ENCODE measurements at regions of chr12 and their contacts with region 1.

Region 1: DNA sequence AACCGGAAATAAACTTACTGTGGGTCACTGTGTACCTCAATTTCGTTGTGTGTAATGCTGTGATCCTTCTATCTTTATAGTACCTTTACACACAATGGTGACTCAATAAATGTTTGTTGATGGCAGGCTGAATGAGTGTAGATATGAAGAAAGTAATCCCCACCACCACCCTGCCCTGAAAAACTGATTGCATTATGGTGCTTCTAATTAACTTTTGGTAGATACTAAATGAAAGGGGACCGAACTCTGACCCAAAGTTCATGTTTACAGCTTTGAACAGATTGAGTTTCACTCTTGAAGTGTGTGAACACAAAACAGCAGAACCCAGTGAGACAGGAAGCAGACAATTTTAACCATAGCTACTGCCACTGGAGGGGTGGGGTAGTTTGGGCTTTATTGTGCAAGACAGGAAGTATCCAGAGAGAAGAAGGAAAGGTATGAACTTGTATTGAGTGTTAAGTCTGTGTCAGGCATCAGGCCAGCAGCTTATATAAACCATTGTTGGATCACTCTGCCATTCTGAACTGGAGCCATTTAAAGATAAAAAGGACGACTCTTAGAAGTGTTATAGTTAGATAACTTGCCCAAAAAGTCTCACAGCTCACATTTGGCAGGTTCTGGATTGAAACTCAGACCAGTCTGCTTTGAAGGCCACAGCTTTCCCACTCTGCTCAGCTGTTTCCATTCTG is 197.0 kb upstream of the AMIGO2 start:
- DNase-seq: peak; percentile 35 to 91 (median 62)
- ATAC-seq: peak; percentile 94
- H3K4me3 ChIP-seq: peak overlapping the region in 1 of 2 experiments; percentile 25
- H3K4me3 Mint-ChIP-seq: peak overlapping the region; percentile 67
- H3K27ac ChIP-seq: peak overlapping the region; percentile 64 to 91
- H3K27ac Mint-ChIP-seq: peak overlapping the region; percentile 97
- H3K4me1 ChIP-seq: peaks cover 67% of the 10 kb centered on the region
- H3K4me1 Mint-ChIP-seq: peaks cover 80% of the 10 kb centered on the region
- H3K27me3 ChIP-seq: no peaks in the 10 kb centered on the region
- H3K27me3 Mint-ChIP-seq: no peaks in the 10 kb centered on the region
- CTCF ChIP-seq: no peak

Region 2: GRCh38 chr12:47164724-47165439 is 111.9 kb before region 1 on chr12:
- CTCF ChIA-PET with region 1: no interaction called
- POLR2A ChIA-PET with region 1: no interaction called
- intact Hi-C with region 1: no loop called
- DNase-seq: no peak
- ATAC-seq: no peak
- H3K4me3 ChIP-seq: no peak overlapping the region
- H3K4me3 Mint-ChIP-seq: no peak overlapping the region
- H3K27ac ChIP-seq: no peak overlapping the region
- H3K27ac Mint-ChIP-seq: no peak overlapping the region
- H3K4me1 ChIP-seq: no peaks in the 10 kb centered on the region
- H3K4me1 Mint-ChIP-seq: peaks cover 31% of the 10 kb centered on the region
- H3K27me3 ChIP-seq: no peaks in the 10 kb centered on the region
- H3K27me3 Mint-ChIP-seq: no peaks in the 10 kb centered on the region
- CTCF ChIP-seq: no peak

Region 3: GRCh38 chr12:47302111-47302671 is 25.4 kb after region 1 on chr12:
- CTCF ChIA-PET with region 1: interaction called, 5 read pairs
- POLR2A ChIA-PET with region 1: interaction called, 7 read pairs
- intact Hi-C with region 1: loop called in 1 of 2 experiments (anchors 2 kb)
- DNase-seq: peak in 1 of 9 experiments; percentile 14
- ATAC-seq: no peak
- H3K4me3 ChIP-seq: no peak overlapping the region
- H3K4me3 Mint-ChIP-seq: peak overlapping the region; percentile 42
- H3K27ac ChIP-seq: no peak overlapping the region
- H3K27ac Mint-ChIP-seq: peak overlapping the region; percentile 80
- H3K4me1 ChIP-seq: peaks cover 39% of the 10 kb centered on the region
- H3K4me1 Mint-ChIP-seq: peaks cover 66% of the 10 kb centered on the region
- H3K27me3 ChIP-seq: no peaks in the 10 kb centered on the region
- H3K27me3 Mint-ChIP-seq: no peaks in the 10 kb centered on the region
- CTCF ChIP-seq: no peak

Region 4: GRCh38 chr12:47307680-47308399 is 31.1 kb after region 1 on chr12:
- CTCF ChIA-PET with region 1: interaction called, 5 read pairs
- POLR2A ChIA-PET with region 1: interaction called, 7 read pairs
- intact Hi-C with region 1: loop called in 1 of 2 experiments (anchors 2 kb)
- DNase-seq: peak; percentile 21 to 81 (median 56)
- ATAC-seq: peak; percentile 91
- H3K4me3 ChIP-seq: peak overlapping the region; percentile 37 to 46
- H3K4me3 Mint-ChIP-seq: peak overlapping the region; percentile 81
- H3K27ac ChIP-seq: peak overlapping the region; percentile 21 to 25
- H3K27ac Mint-ChIP-seq: peak overlapping the region; percentile 88
- H3K4me1 ChIP-seq: peaks cover 12% of the 10 kb centered on the region
- H3K4me1 Mint-ChIP-seq: peaks cover 47% of the 10 kb centered on the region
- H3K27me3 ChIP-seq: no peaks in the 10 kb centered on the region
- H3K27me3 Mint-ChIP-seq: no peaks in the 10 kb centered on the region
- CTCF ChIP-seq: peak; percentile 60

Region 5: DNA sequence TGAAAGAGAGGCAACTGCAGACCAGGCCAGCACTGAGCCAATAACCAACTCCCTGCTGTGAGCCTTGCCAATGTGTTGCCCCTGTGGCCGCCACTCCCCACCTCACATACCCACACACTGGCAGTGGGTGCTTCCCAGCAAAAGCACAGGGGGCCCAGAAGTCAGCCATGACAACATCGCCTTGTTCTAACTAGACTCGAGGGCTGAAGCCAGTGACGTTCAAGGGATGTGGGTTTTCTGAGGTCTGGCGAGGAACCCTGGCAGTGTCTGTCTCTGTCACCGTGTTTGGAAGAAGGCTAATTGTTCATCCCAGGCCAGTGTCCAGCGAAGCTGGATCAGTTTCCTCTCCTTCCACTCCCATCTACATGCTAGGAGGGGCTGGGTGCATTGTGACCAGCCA is 114.8 kb after region 1 on chr12:
- CTCF ChIA-PET with region 1: no interaction called
- POLR2A ChIA-PET with region 1: no interaction called
- intact Hi-C with region 1: loop called (anchors 2 to 5 kb)
- DNase-seq: peak; percentile 37 to 93 (median 69)
- ATAC-seq: peak; percentile 85
- H3K4me3 ChIP-seq: no peak overlapping the region
- H3K4me3 Mint-ChIP-seq: peak overlapping the region; percentile 46
- H3K27ac ChIP-seq: peak overlapping the region; percentile 74 to 76
- H3K27ac Mint-ChIP-seq: peak overlapping the region; percentile 100
- H3K4me1 ChIP-seq: peaks cover 58% of the 10 kb centered on the region
- H3K4me1 Mint-ChIP-seq: peaks cover 78% of the 10 kb centered on the region
- H3K27me3 ChIP-seq: no peaks in the 10 kb centered on the region
- H3K27me3 Mint-ChIP-seq: no peaks in the 10 kb centered on the region
- CTCF ChIP-seq: no peak

Region 6: DNA sequence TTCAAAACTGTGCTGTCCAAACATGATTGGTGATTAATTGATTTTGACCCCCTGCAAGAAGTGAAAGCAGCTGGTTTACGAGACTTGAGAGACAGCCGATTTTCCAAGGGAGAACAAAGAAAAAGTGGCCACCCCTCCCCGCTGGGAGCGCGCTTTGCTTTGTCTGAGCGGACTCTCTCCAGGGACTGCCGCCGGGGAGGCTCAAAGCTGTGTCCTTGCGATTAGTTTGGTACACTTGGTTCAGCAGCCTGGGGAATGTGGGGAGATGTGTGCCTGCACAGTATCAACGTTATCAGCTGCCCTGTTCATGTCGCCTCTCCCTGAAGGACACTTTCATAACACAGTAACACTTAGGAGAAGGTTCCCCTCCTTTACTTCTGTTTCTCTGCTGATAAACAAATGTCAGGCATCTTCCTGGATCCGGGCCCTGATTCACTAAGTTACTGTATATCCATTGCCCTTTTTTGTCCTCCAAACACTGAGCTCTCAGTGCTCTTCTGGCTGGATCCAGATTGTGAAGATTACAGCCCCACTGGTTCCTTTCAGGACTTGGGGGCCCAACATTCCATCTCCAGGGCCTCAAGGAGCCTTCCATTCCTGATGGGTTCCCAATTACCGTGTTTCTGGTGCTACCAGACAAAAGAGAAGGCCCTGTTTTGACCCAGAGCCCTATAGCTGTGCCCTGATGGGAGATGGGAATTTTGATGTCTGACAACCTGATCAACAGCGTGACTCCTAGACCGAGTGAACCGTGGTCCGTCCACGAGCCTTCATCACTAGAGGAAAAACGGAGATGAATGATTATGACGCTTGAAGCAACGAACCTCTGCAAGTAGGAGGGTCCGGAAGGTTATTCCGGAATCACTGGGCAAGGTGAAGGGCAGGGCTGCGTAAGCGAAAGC is 1956.4 kb after region 1 on chr12:
- CTCF ChIA-PET with region 1: no interaction called
- POLR2A ChIA-PET with region 1: no interaction called
- intact Hi-C with region 1: no loop called
- DNase-seq: peak in 1 of 9 experiments; percentile 13
- ATAC-seq: no peak
- H3K4me3 ChIP-seq: no peak overlapping the region
- H3K4me3 Mint-ChIP-seq: peak overlapping the region; percentile 69
- H3K27ac ChIP-seq: no peak overlapping the region
- H3K27ac Mint-ChIP-seq: no peak overlapping the region
- H3K4me1 ChIP-seq: peaks cover 8% of the 10 kb centered on the region
- H3K4me1 Mint-ChIP-seq: peaks cover 10% of the 10 kb centered on the region
- H3K27me3 ChIP-seq: no peaks in the 10 kb centered on the region
- H3K27me3 Mint-ChIP-seq: no peaks in the 10 kb centered on the region
- CTCF ChIP-seq: no peak